HepG2 (cell line): ENCODE measurements at regions of chr12 and their contacts with region 1.

Region 1: DNA sequence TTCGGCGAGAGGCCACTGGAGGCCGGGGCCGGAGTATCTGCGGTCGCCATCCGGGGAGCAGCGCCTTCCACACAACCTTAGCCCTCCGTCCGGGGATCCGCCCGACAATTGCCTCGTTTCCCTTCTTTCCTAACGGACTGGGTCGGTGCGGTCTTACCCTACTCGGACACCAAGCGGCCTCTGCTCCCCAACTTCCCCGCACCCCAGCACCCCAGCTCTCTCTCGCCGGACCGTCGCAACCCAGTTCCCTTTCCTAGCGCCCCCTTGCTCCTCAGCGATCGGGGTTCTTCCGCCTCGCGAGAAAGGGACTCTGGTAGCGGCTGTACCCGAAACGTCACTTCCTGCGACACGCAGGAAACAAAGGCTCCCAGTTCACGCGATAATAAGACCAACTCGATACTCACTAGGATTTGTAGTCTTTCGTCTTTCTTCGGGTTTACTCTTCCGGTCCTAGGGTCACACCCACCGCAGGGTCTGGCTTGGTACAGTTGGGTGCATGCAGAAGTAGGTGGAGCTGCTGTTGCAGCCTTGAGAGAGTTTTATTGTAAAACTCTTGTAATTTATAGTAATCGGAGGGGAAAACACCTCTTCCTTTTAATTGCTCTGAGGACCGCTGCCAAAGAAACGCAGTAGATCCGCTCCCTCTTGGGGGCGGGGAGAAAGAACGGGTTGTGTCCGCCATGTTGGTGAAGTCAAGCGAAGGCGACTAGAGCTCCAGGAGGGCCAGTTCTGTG is at the start of gene ZFC3H1:
- DNase-seq: peak; percentile 99
- ATAC-seq: peak; percentile 94
- H3K4me3 ChIP-seq: peak within 1 kb of the TSS; percentile 88 to 97 (median 94)
- H3K27ac ChIP-seq: peak within 1 kb of the TSS; percentile 99
- H3K4me1 ChIP-seq: peaks cover 24% of the 10 kb centered on the region
- H3K27me3 ChIP-seq: no peaks in the 10 kb centered on the region; a peak in 1 of 5 replicates
- CTCF ChIP-seq: peak; percentile 74
- EP300 ChIP-seq: no peak
- POLR2A ChIP-seq: peak; percentile 80 to 91
- RAD21 ChIP-seq: 0 out of 2 replicates have a peak, but pooled peaks have one; percentile 11
- total RNA-seq, gene ZFC3H1: 8.9 and 17.1 TPM in 2 replicates

Region 2: GRCh38 chr12:71648537-71648936 is 15.2 kb before region 1 on chr12:
- CTCF ChIA-PET with region 1: no interaction called
- POLR2A ChIA-PET with region 1: interaction called, 11 read pairs
- in situ Hi-C with region 1: no loop called
- intact Hi-C with region 1: no loop called
- DNase-seq: no peak
- ATAC-seq: no peak
- H3K4me3 ChIP-seq: no peak overlapping the region
- H3K27ac ChIP-seq: no peak overlapping the region
- H3K4me1 ChIP-seq: no peaks in the 10 kb centered on the region
- H3K27me3 ChIP-seq: no peaks in the 10 kb centered on the region; a peak in 1 of 5 replicates
- CTCF ChIP-seq: no peak
- EP300 ChIP-seq: no peak
- POLR2A ChIP-seq: no peak
- RAD21 ChIP-seq: no peak

Region 3: DNA sequence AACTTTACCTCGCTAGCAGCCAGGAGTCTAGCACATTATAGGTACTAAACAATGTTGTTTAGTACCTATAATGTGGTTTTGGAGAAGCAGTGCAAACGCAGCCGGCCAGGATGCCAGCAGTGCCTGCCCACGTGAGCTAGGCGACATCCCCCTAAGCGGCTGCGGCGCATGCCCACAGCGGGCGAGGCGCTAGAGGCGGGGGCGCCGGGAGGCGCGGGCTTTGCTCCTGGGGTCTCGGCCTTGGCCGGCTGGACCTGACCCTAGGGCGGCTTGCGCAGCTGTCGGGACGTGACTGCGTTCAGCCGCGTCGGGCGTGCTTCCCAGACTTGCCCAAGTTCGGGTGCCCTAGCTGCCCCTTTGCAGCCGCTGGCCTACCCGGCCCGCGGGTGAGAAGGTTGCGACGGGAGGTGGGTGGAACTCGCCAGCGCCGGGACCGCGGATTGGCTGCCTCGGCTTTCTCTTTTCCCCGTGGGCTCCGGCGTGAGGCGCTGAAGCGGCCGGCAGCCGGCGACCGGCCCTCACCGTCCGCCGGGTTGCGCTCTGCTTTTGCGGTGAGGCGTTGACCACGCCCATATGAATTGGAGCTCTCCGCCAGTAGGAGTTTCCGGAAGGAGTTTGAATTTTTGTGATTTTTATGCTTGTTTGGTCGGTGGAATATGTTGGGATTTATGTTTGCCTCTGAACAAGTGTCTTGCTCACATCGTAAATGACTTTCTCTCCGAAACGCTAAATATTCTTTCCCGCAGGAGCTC is 22.4 kb after region 1 on chr12 and contains the start of gene TMEM19:
- CTCF ChIA-PET with region 1: no interaction called
- POLR2A ChIA-PET with region 1: interaction called, 78 read pairs
- in situ Hi-C with region 1: no loop called
- intact Hi-C with region 1: loop called (anchors 1 kb)
- DNase-seq: peak; percentile 79
- ATAC-seq: peak; percentile 97
- H3K4me3 ChIP-seq: peak within 1 kb of the TSS; percentile 73 to 79 (median 73)
- H3K27ac ChIP-seq: peak within 1 kb of the TSS; percentile 93
- H3K4me1 ChIP-seq: peaks cover 46% of the 10 kb centered on the region
- H3K27me3 ChIP-seq: no peaks in the 10 kb centered on the region
- CTCF ChIP-seq: peak; percentile 59
- EP300 ChIP-seq: peak; percentile 15 to 54; a peak in 1 of 4 replicates
- POLR2A ChIP-seq: peak; percentile 81 to 88
- RAD21 ChIP-seq: peak; percentile 57
- total RNA-seq, gene TMEM19: 21.9 and 22.5 TPM in 2 replicates

Region 4: DNA sequence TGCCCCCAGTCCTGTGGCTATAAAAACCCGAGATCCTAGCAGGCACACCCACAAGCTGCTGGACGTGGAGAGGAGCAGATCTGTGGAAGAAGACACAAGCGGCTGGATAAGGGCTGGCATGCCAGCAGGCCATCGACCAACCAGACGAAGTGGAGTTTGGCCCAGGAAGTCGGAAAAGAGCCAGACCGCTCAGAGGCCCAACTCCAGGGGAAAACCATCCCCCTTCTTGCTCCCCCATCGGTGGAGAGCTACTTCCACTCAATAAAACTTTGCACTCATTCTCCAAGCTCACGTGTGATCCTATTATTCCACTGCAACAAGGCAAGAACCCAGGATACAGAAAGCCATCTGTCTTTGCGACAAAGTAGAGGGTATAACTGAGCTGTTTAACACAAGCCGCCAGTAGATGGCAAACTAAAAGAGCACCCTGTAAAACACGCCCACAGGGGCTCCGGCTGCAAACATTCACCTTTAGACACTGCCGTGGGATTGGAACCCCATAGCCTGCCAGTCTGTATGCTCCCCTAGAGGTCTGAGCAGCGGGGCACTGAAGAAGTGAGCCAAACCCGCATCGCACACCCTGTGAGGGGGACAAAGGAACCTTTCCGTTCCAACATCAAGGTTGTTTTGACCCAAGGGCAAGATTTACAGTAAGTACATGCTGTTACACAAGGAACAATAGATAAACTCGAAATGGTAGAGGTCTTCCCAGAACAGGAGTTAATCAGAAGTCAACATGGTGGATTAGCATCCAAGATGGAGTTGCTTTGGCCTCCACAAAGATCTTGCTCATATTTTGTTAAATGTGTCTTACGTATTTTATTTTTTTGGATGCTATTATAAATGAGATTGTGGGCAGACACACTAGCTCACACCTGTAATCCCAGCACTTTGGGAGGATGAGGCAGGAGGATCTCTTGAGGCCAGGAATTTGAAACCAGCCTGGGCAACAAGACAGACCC is 68.3 kb after region 1 on chr12:
- CTCF ChIA-PET with region 1: no interaction called
- POLR2A ChIA-PET with region 1: interaction called, 10 read pairs
- in situ Hi-C with region 1: no loop called
- intact Hi-C with region 1: no loop called
- DNase-seq: peak; percentile 79
- ATAC-seq: peak; percentile 99
- H3K4me3 ChIP-seq: peak overlapping the region; percentile 49 to 72 (median 62)
- H3K27ac ChIP-seq: peak overlapping the region; percentile 62
- H3K4me1 ChIP-seq: peaks cover 19% of the 10 kb centered on the region
- H3K27me3 ChIP-seq: no peaks in the 10 kb centered on the region
- CTCF ChIP-seq: peak; percentile 73
- EP300 ChIP-seq: peak in 1 of 2 experiments; percentile 5; a peak in 1 of 4 replicates
- POLR2A ChIP-seq: peak; percentile 52 to 53; a peak in 3 of 4 replicates
- RAD21 ChIP-seq: peak; percentile 33; the same call in 1 of the 2 replicates

Region 5: GRCh38 chr12:71746983-71747611 is 83.4 kb after region 1 on chr12:
- CTCF ChIA-PET with region 1: no interaction called
- POLR2A ChIA-PET with region 1: interaction called, 8 read pairs
- in situ Hi-C with region 1: loop called (anchors 5 kb)
- intact Hi-C with region 1: loop called (anchors 2 kb)
- DNase-seq: peak; percentile 66
- ATAC-seq: peak; percentile 96
- H3K4me3 ChIP-seq: no peak overlapping the region; a peak in 1 of 6 replicates
- H3K27ac ChIP-seq: no peak overlapping the region
- H3K4me1 ChIP-seq: peaks cover 10% of the 10 kb centered on the region
- H3K27me3 ChIP-seq: no peaks in the 10 kb centered on the region; a peak in 1 of 5 replicates
- CTCF ChIP-seq: peak; percentile 86
- EP300 ChIP-seq: no peak
- POLR2A ChIP-seq: no peak
- RAD21 ChIP-seq: peak; percentile 69

Region 6: DNA sequence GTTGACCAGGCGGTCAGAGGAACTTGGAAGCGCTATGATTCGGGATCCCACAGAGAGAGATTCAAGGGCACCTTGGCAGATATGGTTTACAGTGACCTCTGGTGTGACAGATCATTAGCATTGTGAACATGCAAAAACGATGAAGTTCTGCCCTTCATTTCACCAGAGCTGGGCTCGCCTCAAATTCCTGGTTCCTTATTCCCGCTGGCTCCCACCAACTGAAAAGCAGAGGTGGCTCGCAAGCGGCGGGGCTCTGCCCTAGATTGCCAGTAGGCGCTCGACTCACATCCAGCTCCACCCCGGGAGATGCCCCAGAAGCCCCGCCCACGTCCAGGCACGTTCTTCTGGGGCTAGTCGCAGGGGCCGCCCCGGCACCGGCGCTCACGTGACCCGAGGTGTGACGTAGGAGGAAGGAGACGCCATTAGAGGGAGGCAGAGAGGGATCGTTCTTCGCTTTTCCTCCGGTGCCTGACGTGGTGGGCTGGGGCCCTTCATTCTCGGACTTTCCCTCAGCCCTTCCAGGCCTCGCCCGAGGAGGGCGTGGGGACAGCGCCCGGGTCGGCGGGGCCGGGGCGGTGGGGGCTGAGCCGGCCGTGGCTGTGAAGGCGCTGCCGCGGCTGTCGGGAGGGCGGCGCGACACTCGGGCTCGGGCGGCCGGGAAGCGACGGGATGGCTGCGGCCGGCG is 90.9 kb after region 1 on chr12 and contains the start of gene RAB21:
- CTCF ChIA-PET with region 1: no interaction called
- POLR2A ChIA-PET with region 1: interaction called, 17 read pairs
- in situ Hi-C with region 1: loop called (anchors 5 kb)
- intact Hi-C with region 1: no loop called
- DNase-seq: peak; percentile 94
- ATAC-seq: peak; percentile 99
- H3K4me3 ChIP-seq: peak within 1 kb of the TSS; percentile 92 to 99 (median 97)
- H3K27ac ChIP-seq: peak within 1 kb of the TSS; percentile 83
- H3K4me1 ChIP-seq: peaks cover 40% of the 10 kb centered on the region
- H3K27me3 ChIP-seq: no peaks in the 10 kb centered on the region; a peak in 2 of 5 replicates
- CTCF ChIP-seq: peak; percentile 32
- EP300 ChIP-seq: 0 out of 4 replicates have a peak, but pooled peaks of 1 of the 2 experiments have one; percentile 7
- POLR2A ChIP-seq: peak; percentile 87 to 94
- RAD21 ChIP-seq: no peak; the same call in 1 of the 2 replicates
- total RNA-seq, gene RAB21: 50.9 and 61.4 TPM in 2 replicates